A673 (cell line): ENCODE measurements at regions of chr7 and their contacts with region 1.

Region 1: GRCh38 chr7:194252-195000 is 2.1 kb downstream of the FAM20C start:
- DNase-seq: no peak
- H3K4me3 ChIP-seq: peak overlapping the region; percentile 89
- H3K27ac ChIP-seq: peak overlapping the region; percentile 19
- H3K4me1 ChIP-seq: peaks cover 19% of the 10 kb centered on the region
- H3K27me3 ChIP-seq: no peaks in the 10 kb centered on the region
- CTCF ChIP-seq: no peak

Region 2: GRCh38 chr7:311131-311680 is 116.8 kb after region 1 on chr7:
- CTCF ChIA-PET with region 1: no interaction called
- POLR2A ChIA-PET with region 1: interaction called, 12 read pairs
- intact Hi-C with region 1: no loop called
- DNase-seq: no peak
- H3K4me3 ChIP-seq: no peak overlapping the region
- H3K27ac ChIP-seq: no peak overlapping the region
- H3K4me1 ChIP-seq: no peaks in the 10 kb centered on the region
- H3K27me3 ChIP-seq: peaks cover 37% of the 10 kb centered on the region
- CTCF ChIP-seq: no peak